Heart left ventricle (tissue), 16 donors: ENCODE measurements at regions of chr15 and their contacts with region 1.

Region 1: DNA sequence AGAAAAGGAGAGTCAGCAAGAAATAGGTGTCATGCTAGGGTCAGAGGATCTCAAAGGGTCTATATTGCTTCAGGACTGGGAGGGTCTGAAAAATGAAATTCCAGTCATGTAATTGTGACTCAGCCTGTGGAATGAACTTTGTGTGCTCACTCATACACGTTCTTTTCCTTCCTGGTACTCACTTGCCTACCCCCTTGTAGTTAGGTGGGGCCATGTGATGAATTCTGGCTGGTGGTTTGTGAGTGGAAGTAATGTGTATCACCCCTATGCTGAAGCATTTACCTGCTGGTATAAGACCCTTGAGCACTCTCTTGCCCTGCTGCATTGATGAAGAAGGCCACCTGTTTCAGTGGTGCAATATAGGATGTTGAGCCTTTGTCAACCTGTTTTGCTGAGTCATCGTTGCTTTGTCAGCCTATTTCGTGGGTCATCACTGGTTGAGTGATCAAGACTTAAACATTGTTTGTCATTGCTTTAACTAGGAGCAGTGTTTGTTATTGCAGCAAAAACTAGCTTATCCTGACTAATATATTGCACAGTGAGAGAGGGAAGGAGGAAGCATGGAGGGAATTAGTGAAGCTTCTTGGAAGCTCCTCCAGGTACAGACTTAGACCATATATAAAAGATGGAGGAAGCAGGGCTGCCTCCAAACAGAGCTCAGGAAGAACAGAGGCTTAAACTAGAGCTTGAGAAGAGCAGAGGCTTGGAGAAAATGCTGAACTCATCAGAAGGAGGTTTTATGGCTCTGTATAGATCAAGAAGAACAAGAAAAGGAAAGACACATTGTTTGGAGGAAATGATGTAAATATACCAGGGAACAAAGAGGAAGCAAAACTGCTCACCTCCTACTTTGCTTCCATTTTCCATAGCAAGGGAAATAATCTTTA is 28.9 kb downstream of the TLNRD1 start:
- DNase-seq: no peak
- ATAC-seq: peak in 3 of 4 donors; percentile 43 to 66 (median 65)
- H3K4me3 ChIP-seq: no peak overlapping the region
- H3K27ac ChIP-seq: peak overlapping the region in 9 of 12 donors; percentile 11 to 79 (median 25)
- H3K4me1 ChIP-seq: peaks cover 0 to 69% (median 37%) of the 10 kb centered on the region in 12 donors
- H3K27me3 ChIP-seq: no peaks in the 10 kb centered on the region
- CTCF ChIP-seq: no peak
- POLR2A ChIP-seq: no peak

Region 2: GRCh38 chr15:81060907-81061306 is 31.2 kb after region 1 on chr15:
- intact Hi-C with region 1: loop called in 2 of 10 experiments (anchors 5 kb)
- DNase-seq: no peak
- ATAC-seq: no peak
- H3K4me3 ChIP-seq: no peak overlapping the region
- H3K27ac ChIP-seq: no peak overlapping the region
- H3K4me1 ChIP-seq: peaks cover 0 to 23% (median 0%) of the 10 kb centered on the region in 12 donors
- H3K27me3 ChIP-seq: no peaks in the 10 kb centered on the region
- CTCF ChIP-seq: no peak
- POLR2A ChIP-seq: no peak

Region 3: DNA sequence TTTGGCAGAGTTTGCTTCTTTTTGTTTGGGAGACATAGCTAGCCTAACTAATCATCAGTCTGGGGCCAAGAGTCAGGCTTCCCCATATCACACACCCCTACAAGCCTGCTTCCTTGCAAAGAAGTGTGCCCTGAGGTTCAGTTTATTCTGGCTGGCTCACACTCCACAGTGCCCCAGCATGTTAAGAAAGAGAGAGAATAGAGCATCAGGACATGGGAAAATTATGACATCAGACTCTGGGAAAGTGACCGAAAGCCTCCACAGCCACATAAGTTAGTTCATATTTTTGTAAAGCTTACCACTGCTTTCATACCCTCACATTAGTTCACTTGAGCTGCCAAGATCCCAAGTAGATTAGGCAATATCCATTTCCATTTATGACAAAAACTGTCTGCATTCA is 41.5 kb after region 1 on chr15:
- intact Hi-C with region 1: loop called in 1 of 10 experiments (anchors 5 kb)
- DNase-seq: no peak
- ATAC-seq: peak in 2 of 4 donors; percentile 41 to 45
- H3K4me3 ChIP-seq: no peak overlapping the region
- H3K27ac ChIP-seq: no peak overlapping the region
- H3K4me1 ChIP-seq: peaks cover 0 to 29% (median 9%) of the 10 kb centered on the region in 12 donors
- H3K27me3 ChIP-seq: no peaks in the 10 kb centered on the region
- CTCF ChIP-seq: no peak
- POLR2A ChIP-seq: no peak

Region 4: GRCh38 chr15:81091889-81092558 is 62.4 kb after region 1 on chr15:
- intact Hi-C with region 1: loop called in 2 of 10 experiments (anchors 5 to 10 kb)
- DNase-seq: peak in 4 of 5 donors; percentile 32 to 68 (median 47)
- ATAC-seq: peak; percentile 81 to 96 (median 94)
- H3K4me3 ChIP-seq: peak overlapping the region in 3 of 12 donors; percentile 8 to 19 (median 8)
- H3K27ac ChIP-seq: peak overlapping the region in 11 of 12 donors; percentile 50 to 82 (median 62)
- H3K4me1 ChIP-seq: peaks cover 0 to 35% (median 26%) of the 10 kb centered on the region in 12 donors
- H3K27me3 ChIP-seq: no peaks in the 10 kb centered on the region
- CTCF ChIP-seq: no peak
- POLR2A ChIP-seq: no peak

Region 5: GRCh38 chr15:81098861-81099651 is 69.4 kb after region 1 on chr15:
- intact Hi-C with region 1: loop called in 2 of 10 experiments (anchors 5 to 10 kb)
- DNase-seq: peak; percentile 54 to 81 (median 68)
- ATAC-seq: peak; percentile 74 to 92 (median 82)
- H3K4me3 ChIP-seq: peak overlapping the region in 6 of 12 donors; percentile 3 to 27 (median 18)
- H3K27ac ChIP-seq: peak overlapping the region in 11 of 12 donors; percentile 15 to 74 (median 57)
- H3K4me1 ChIP-seq: peaks cover 0 to 43% (median 21%) of the 10 kb centered on the region in 12 donors
- H3K27me3 ChIP-seq: no peaks in the 10 kb centered on the region
- CTCF ChIP-seq: no peak
- POLR2A ChIP-seq: no peak

Region 6: DNA sequence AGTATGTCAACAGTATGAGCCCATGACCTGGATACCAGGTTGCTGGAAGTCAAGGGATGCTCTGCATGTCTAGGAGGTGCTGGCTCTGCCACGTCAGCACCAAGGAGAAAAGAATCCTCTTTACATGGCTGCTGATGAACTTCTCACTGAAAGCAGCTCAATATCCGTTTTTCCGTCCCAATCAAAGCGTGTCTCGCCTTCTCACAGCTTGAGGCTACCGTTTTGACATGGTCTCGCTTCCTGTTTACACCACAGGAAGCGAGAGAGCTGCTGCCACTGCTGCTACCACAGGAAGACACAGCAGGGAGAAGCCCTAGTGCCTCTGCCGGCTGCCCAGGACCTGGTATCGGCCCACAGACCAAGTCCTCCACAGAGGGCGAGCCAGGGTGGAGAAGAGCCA is 267.0 kb after region 1 on chr15:
- intact Hi-C with region 1: no loop called
- DNase-seq: peak; percentile 50 to 79 (median 63)
- ATAC-seq: peak; percentile 56 to 79 (median 65)
- H3K4me3 ChIP-seq: peak overlapping the region in 10 of 12 donors; percentile 2 to 65 (median 35)
- H3K27ac ChIP-seq: peak overlapping the region in 11 of 12 donors; percentile 9 to 93 (median 52)
- H3K4me1 ChIP-seq: peaks cover 0 to 92% (median 16%) of the 10 kb centered on the region in 12 donors
- H3K27me3 ChIP-seq: no peaks in the 10 kb centered on the region
- CTCF ChIP-seq: no peak
- POLR2A ChIP-seq: no peak